Upper lobe of right lung (tissue), 1 donor: ENCODE measurements at regions of chr6 and their contacts with region 1.

Region 1: GRCh38 chr6:46848684-46849360 is 55.6 kb downstream of the MEP1A start:
- DNase-seq: peak; percentile 93
- ATAC-seq: peak; percentile 99
- H3K4me3 ChIP-seq: no peak overlapping the region
- H3K27ac ChIP-seq: no peak overlapping the region
- H3K4me1 ChIP-seq: peaks cover 8% of the 10 kb centered on the region
- H3K27me3 ChIP-seq: no peaks in the 10 kb centered on the region
- CTCF ChIP-seq: peak; percentile 98

Region 2: DNA sequence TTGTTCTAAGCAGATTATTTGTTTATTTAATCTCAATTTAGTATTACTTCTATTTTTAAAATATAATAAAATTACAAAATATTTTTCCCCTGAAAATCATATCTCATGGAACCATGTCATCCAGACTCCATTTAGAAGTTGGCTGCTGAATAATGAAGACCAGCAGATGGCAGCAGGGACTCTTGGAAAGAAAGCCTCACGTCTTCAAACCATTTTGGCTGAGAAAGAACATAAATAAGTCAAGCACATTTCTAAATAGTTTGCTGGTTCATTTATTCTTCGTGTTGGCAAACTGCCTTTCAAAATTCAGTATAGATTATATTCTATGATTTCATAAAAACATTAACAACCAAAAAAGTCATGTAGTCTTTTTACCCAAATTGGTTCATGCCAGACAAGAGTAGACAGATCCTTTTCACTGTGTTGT is 429.2 kb before region 1 on chr6:
- intact Hi-C with region 1: no loop called
- DNase-seq: no peak
- ATAC-seq: peak; percentile 78
- H3K4me3 ChIP-seq: no peak overlapping the region
- H3K27ac ChIP-seq: no peak overlapping the region
- H3K4me1 ChIP-seq: peaks cover 5% of the 10 kb centered on the region
- H3K27me3 ChIP-seq: no peaks in the 10 kb centered on the region
- CTCF ChIP-seq: peak; percentile 78

Region 3: DNA sequence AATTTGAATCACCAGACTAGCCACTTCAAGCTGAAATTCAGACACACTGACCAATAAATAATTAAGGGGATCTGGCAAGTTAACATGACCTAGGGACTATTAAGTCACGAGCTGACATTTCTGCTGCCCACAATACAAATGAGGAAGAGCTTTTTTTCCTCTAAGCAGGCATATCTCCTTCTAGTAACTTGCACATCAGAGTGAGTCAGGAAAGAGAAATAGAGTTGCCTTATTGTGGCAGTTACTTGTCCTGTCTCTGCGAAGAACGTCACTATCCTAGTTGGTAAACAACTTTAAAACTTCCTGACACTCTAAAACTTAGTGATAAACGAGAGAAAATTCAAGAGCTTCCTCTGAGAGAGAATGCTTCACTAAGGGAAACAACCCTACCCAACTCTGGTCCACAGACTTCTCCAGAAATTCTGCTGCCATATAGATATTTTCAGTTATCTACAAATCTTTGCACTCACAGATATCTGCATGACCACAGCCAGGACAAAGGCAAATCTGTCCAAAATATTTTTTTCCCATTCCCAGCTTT is 117.8 kb before region 1 on chr6:
- intact Hi-C with region 1: no loop called
- DNase-seq: no peak
- ATAC-seq: peak; percentile 70
- H3K4me3 ChIP-seq: no peak overlapping the region
- H3K27ac ChIP-seq: peak overlapping the region; percentile 14
- H3K4me1 ChIP-seq: peaks cover 10% of the 10 kb centered on the region
- H3K27me3 ChIP-seq: peaks cover 16% of the 10 kb centered on the region
- CTCF ChIP-seq: no peak

Region 4: DNA sequence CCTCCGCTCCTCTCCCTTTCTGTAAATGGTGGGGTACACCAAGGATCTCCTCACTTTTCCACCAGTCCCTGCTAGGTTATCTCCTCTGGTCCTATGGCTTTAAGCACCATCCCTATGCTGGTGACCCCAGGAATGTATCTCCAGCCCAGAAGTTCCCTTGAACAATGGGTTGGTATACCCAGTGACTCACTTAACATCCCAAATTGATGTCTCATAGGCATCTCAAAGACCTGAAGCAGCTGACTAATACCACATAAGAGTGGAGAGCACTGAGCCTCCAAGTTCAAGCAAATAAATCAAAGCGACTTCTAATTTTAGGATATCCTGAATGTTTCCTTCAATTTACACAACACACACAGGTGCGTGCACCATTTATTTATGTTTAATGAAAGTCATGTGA is 145.0 kb after region 1 on chr6:
- intact Hi-C with region 1: loop called (anchors 10 kb)
- DNase-seq: no peak
- ATAC-seq: peak; percentile 82
- H3K4me3 ChIP-seq: no peak overlapping the region
- H3K27ac ChIP-seq: no peak overlapping the region
- H3K4me1 ChIP-seq: peaks cover 15% of the 10 kb centered on the region
- H3K27me3 ChIP-seq: no peaks in the 10 kb centered on the region
- CTCF ChIP-seq: no peak